Mammary epithelial cell (primary cell): ENCODE measurements at regions of chr1 and their contacts with region 1.

Region 1: DNA sequence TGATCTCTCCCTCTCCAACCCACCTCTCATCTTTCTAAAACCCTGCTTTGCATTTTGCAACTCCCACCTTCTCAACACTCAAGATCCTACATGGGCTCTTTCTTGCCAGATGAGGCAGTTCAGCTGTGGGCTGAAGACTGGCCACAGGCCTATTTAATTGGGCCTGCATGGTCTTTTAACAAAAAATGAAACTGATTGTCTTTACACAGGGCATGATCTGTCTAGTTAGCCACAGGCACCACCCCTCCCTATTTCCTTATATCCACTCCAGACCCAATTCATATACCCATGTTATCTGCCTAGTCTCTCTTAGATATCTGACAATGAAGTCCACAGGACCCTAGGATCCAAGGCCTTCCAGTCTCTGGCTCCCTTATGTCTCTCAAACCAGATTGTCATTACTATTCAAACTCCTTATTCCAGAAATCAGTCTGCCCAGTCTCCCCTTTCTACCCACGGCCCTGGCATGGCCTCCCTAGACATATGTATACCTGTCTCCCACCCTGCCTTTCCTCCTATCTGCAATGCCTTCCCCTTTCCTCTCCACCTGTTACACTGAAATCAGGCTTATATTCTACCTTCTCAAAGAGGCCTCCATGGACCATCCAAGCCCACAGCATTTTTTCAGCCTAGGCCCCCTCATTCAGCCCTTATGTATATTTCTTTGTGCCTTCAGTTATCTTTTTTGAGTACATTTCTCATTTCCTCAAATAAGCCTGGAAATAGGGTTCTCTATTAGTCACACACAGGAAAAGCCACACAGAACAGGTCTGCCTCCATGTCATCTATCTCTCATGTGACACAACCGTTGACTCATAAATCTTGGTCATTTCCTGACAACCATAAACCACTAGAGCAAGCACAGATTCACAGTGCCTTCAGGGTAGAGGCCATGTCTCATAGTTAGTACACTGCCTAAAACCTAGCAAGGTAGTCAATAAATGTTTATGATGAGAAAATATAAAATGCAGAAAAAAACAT is 39.0 kb downstream of the LPAR3 start:
- DNase-seq: peak; percentile 97
- H3K4me3 ChIP-seq: no peak overlapping the region
- H3K27ac ChIP-seq: peak overlapping the region; percentile 89
- H3K4me1 ChIP-seq: peaks cover 44% of the 10 kb centered on the region
- H3K27me3 ChIP-seq: no peaks in the 10 kb centered on the region
- CTCF ChIP-seq: no peak

Region 2: GRCh38 chr1:84834419-84835064 is 19.5 kb before region 1 on chr1:
- CTCF ChIA-PET with region 1: interaction called, 3 read pairs
- dilution Hi-C with region 1: no loop called
- in situ Hi-C with region 1: no loop called
- intact Hi-C with region 1: loop called (anchors 2 kb)
- DNase-seq: peak; percentile 86
- H3K4me3 ChIP-seq: no peak overlapping the region
- H3K27ac ChIP-seq: peak overlapping the region; percentile 93
- H3K4me1 ChIP-seq: peaks cover 25% of the 10 kb centered on the region
- H3K27me3 ChIP-seq: no peaks in the 10 kb centered on the region
- CTCF ChIP-seq: no peak

Region 3: GRCh38 chr1:84887261-84887934 is 33.4 kb after region 1 on chr1:
- CTCF ChIA-PET with region 1: no interaction called
- dilution Hi-C with region 1: loop called (anchors 5 kb)
- in situ Hi-C with region 1: no loop called
- intact Hi-C with region 1: loop called (anchors 1 kb)
- DNase-seq: peak; percentile 94
- H3K4me3 ChIP-seq: peak overlapping the region in 1 of 3 experiments; percentile 3
- H3K27ac ChIP-seq: peak overlapping the region; percentile 92
- H3K4me1 ChIP-seq: peaks cover 45% of the 10 kb centered on the region
- H3K27me3 ChIP-seq: no peaks in the 10 kb centered on the region
- CTCF ChIP-seq: no peak

Region 4: DNA sequence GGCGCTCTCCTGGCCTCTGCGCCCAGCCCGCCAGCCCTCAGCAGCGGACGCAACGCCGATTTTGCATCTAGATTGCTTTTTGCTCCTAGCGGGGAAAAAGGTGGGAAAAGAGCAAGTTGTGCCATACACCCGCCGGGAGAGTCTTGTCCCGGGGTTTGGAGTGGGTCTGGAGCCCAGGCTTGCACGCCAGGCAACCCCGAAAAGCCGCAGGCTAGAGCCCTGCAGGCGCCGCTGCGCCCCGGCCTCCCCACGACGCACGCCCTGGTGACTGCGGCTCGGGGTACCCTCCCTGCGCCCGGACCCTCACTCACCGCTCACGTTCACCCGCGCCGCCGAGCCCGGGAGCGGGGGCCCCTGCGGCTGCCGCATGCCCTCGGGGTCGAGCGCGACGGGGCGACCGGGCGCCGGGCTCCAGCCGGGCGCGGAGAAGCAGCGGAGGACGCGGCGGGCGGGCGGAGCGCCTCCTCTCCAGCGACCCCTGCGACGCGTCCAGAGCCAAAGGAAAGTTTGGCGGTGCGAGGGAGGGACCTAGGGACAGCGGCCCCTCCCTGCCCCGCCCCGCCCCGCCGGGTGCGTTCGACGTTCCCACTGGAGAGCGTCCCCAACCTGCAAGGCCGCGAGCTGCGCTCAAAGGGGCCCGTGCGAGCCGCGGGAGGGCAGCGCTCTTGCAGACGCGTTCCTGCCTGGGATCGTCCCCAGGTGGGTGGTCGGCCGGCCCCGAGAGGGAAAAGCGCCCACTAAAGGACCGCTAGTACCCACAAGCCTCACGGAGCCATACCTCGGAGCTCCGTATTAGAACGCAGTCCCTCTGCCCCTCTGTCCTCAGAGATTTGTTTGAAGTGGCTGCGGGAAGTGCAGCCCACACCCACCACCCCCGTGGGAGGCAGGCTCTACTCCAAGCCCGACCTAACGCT is 38.9 kb after region 1 on chr1 and contains the start of gene LPAR3:
- CTCF ChIA-PET with region 1: no interaction called
- dilution Hi-C with region 1: loop called (anchors 5 kb)
- in situ Hi-C with region 1: no loop called
- intact Hi-C with region 1: no loop called
- DNase-seq: peak; percentile 35
- H3K4me3 ChIP-seq: peak within 1 kb of the TSS; percentile 57 to 63 (median 60)
- H3K27ac ChIP-seq: peak within 1 kb of the TSS; percentile 37
- H3K4me1 ChIP-seq: peaks cover 39% of the 10 kb centered on the region
- H3K27me3 ChIP-seq: no peaks in the 10 kb centered on the region
- CTCF ChIP-seq: no peak
- total RNA-seq, gene LPAR3: 14.3 to 17.2 TPM